G401 (cell line): ENCODE measurements at regions of chr21 and their contacts with region 1.

Region 1: GRCh38 chr21:44792702-44793591 is 8.7 kb downstream of the UBE2G2 start:
- DNase-seq: peak; percentile 81

Region 2: DNA sequence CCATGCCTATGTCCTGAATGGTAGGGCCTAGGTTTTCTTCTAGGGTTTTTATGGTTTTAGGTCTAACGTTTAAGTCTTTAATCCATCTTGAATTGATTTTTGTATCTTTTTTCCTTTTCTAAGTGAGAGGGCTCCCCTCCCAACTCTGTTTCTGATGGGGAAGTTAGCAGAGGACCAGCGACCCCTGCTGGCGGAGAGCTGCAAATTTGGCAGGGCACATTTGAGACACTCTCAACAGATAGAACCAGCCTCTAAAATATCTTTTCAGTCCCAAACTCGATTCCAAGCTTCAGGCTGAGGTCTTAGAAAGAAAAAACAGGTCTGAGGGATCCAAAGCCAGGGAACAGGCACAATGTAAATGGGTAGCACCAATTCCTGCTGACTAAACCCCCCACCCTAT is 305.1 kb before region 1 on chr21:
- in situ Hi-C with region 1: loop called (anchors 25 kb)
- DNase-seq: peak; percentile 4